ENCODE measurements at regions of chr5 and their contacts with region 1.

Region 1: GRCh38 chr5:134738133-134738962 is at the start of gene CAMLG:
- DNase-seq: peak; percentile 84 to 99
- ATAC-seq: peak; percentile 93 to 96
- H3K4me3 ChIP-seq: peak within 1 kb of the TSS; percentile 85
- H3K27ac ChIP-seq: peak within 1 kb of the TSS; percentile 85 to 88
- H3K4me1 ChIP-seq: peaks cover 13% of the 10 kb centered on the region; the same call in 2 of the 3 replicates
- CTCF ChIP-seq: peak; percentile 65
- EP300 ChIP-seq: no peak
- POLR2A ChIP-seq: peak; percentile 75
- RAD21 ChIP-seq: peak; percentile 57 to 63
- polyA plus RNA-seq, gene CAMLG: 18.0 and 26.2 TPM in 2 replicates

Region 2: DNA sequence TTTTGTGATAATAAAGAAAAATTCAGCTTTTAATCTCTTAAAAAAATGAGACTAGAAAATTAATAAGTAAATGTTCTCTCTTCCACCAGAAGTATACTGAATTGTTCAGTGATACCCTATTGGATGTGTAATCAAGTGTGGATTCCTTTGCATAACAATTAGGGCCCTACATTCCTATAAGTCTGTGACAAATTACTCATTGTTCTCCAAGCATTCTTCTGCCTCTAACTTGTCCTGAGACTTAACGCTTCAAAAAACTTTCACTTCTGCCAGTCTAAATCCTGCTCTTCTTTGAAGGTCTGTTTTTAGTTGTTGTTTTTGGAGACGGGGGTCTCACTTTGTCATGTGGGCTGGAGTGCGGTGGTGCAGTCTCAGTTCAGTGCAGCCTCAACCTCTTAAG is 11.1 kb after region 1 on chr5:
- CTCF ChIA-PET with region 1: interaction called, 51 read pairs
- POLR2A ChIA-PET with region 1: no interaction called
- DNase-seq: no peak
- ATAC-seq: no peak
- H3K4me3 ChIP-seq: no peak overlapping the region
- H3K27ac ChIP-seq: no peak overlapping the region
- H3K4me1 ChIP-seq: no peaks in the 10 kb centered on the region
- CTCF ChIP-seq: no peak
- EP300 ChIP-seq: no peak
- POLR2A ChIP-seq: no peak
- RAD21 ChIP-seq: no peak

Region 3: DNA sequence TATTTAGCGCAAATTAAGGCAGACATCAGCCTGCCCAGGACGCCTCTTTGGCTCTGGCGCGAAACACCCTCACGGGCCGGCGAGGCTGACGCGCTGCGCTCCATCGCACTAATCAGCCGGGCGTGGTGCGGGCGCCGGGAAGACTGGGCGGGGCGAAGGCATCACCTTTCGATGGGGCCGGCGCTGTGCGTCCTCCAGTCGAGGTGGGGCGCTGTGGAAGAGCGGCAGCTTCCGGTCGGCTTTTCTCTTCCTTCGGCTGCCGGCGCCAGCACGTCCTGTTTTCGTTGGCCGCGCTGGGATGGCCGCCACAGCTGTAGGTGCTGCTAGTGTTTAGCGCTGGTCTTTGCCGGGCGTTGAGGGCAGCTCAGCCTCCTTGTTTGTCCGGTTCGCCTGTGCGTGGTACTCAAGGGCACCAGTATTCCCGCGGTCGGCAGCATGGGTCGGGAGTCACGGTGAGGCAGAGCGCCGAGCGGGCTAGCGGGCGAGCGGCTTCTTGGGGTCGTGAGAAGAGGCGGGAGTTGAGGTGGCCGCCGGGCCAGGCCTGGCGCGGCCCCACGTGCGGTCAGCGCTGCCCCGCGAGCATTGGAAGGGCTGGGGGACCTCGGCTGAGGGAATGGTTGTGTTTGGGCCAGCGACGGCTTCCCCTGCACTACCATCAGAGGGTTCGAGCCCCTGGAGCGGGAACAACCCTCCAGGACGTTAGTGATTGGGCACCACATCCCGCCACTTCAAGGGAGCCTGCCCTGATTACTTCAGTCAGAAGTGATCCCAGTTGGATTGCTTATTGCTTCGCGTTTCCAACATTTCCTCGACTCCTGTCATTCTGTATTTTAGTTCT is 20.4 kb after region 1 on chr5 and contains the start of gene DDX46:
- CTCF ChIA-PET with region 1: interaction called, 51 read pairs
- POLR2A ChIA-PET with region 1: interaction called, 9 read pairs
- DNase-seq: peak; percentile 94 to 95
- ATAC-seq: peak; percentile 98 to 99
- H3K4me3 ChIP-seq: peak within 1 kb of the TSS; percentile 99
- H3K27ac ChIP-seq: peak within 1 kb of the TSS; percentile 93
- H3K4me1 ChIP-seq: peaks cover 14% of the 10 kb centered on the region
- CTCF ChIP-seq: peak; percentile 74
- EP300 ChIP-seq: no peak
- POLR2A ChIP-seq: peak; percentile 84
- RAD21 ChIP-seq: no peak
- polyA plus RNA-seq, gene DDX46: 74.7 and 104 TPM in 2 replicates